Psoas muscle (tissue), 8 donors: ENCODE measurements at regions of chr3 and their contacts with region 1.

Region 1: DNA sequence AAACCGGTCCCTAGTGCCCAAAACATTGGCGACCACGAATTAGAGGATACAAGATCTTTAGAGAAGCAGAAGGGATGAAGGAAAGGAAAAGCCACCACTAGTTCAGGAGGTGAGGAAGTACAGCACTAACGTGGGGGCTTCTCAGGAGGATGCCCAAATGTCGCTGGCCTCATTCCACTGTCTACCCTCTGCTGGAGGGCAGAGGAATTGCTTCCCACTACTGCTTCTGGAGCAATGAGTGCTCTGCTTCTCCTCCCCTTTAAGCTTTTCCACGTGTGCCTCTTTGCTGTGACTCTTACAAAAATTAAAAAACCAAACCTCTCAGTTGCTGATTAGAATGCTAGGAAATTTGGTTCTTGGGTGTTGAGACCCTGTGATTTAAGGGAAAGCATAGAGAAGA is 281.3 kb downstream of the CLSTN2 start:
- DNase-seq: no peak
- ATAC-seq: peak in 2 of 4 donors; percentile 59 to 65
- H3K4me3 ChIP-seq: no peak overlapping the region
- H3K27ac ChIP-seq: no peak overlapping the region
- H3K4me1 ChIP-seq: no peaks in the 10 kb centered on the region
- H3K27me3 ChIP-seq: no peaks in the 10 kb centered on the region
- CTCF ChIP-seq: peak; percentile 43

Region 2: GRCh38 chr3:139611528-139611927 is 604.7 kb before region 1 on chr3:
- intact Hi-C with region 1: no loop called
- DNase-seq: no peak
- ATAC-seq: no peak
- H3K4me3 ChIP-seq: no peak overlapping the region
- H3K27ac ChIP-seq: no peak overlapping the region
- H3K4me1 ChIP-seq: no peaks in the 10 kb centered on the region
- H3K27me3 ChIP-seq: no peaks in the 10 kb centered on the region
- CTCF ChIP-seq: no peak

Region 3: GRCh38 chr3:140128631-140129030 is 87.6 kb before region 1 on chr3:
- intact Hi-C with region 1: loop called in 1 of 2 experiments (anchors 5 kb)
- DNase-seq: peak; percentile 21 to 63
- ATAC-seq: peak; percentile 53 to 83 (median 64)
- H3K4me3 ChIP-seq: no peak overlapping the region
- H3K27ac ChIP-seq: no peak overlapping the region
- H3K4me1 ChIP-seq: no peaks in the 10 kb centered on the region
- H3K27me3 ChIP-seq: no peaks in the 10 kb centered on the region
- CTCF ChIP-seq: peak; percentile 57

Region 4: DNA sequence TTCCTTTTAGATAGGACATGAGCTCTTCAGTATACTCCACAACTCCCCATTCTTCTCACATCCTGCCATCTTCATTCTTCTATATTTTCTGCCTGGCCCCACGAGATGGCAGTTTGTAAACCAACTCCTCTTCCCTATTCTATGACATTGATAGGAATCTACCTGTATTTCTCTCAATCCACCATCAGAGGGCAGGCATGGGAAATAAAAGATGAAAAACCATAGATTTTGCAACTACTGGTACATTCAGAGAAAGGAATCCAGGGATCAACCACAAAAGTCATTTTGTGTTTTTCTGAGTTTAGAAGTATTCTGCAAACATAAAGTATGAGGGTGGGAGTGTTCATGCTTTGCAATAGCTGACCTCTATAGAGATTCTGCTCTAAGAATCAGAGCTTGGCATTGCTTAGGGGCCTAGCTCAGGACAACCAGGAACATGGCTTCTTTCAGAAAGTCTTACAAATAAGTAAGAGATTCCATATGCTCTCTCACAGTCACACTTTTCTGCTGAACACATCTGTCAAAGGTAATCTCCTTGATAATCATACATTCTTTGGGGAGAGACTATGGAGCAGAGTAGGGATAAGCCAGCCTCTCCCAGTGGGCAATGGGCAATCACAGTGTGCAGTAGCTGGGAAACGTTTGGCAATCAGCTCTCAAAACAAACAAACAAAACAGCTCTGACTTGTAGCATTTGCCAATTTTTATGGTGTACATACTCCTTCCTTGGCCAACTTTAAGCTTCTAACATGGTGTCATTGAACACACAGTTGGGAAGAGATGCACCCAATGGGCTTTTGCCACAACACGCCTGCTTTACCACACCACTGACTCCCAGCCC is 682.3 kb after region 1 on chr3:
- intact Hi-C with region 1: no loop called
- DNase-seq: no peak
- ATAC-seq: peak in 3 of 4 donors; percentile 76 to 91 (median 81)
- H3K4me3 ChIP-seq: no peak overlapping the region
- H3K27ac ChIP-seq: no peak overlapping the region
- H3K4me1 ChIP-seq: peaks cover 3% of the 10 kb centered on the region
- H3K27me3 ChIP-seq: no peaks in the 10 kb centered on the region
- CTCF ChIP-seq: peak; percentile 57